ENCODE measurements at regions of chr18 and their contacts with region 1.

Region 1: GRCh38 chr18:49339146-49339545 is 121.3 kb downstream of the DYM start:
- DNase-seq: no peak
- H3K4me3 ChIP-seq: no peak overlapping the region
- H3K27ac ChIP-seq: no peak overlapping the region
- H3K4me1 ChIP-seq: no peaks in the 10 kb centered on the region
- H3K27me3 ChIP-seq: no peaks in the 10 kb centered on the region
- CTCF ChIP-seq: no peak
- POLR2A ChIP-seq: no peak

Region 2: GRCh38 chr18:49206717-49207116 is 132.4 kb before region 1 on chr18:
- intact Hi-C with region 1: no loop called
- DNase-seq: no peak
- H3K4me3 ChIP-seq: no peak overlapping the region
- H3K27ac ChIP-seq: no peak overlapping the region
- H3K4me1 ChIP-seq: no peaks in the 10 kb centered on the region
- H3K27me3 ChIP-seq: no peaks in the 10 kb centered on the region
- CTCF ChIP-seq: no peak
- POLR2A ChIP-seq: no peak

Region 3: DNA sequence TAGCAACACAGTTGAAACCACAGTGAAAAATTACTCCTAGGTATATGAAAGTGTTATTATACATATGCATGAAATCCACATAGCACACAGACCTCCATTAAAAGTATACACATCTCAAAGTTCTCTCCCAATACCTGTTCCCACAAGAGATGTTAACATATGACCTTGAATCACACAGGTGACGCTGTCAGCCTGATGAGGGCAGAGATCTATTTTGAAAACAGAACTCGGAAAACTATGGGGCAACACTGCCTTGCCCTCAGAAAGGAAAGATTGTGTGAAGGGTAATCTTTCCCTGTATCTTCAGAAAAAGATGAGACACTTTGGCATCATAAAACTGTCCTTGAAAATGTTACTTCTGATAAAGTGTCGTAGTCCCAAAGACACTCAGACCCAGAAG is 38.6 kb after region 1 on chr18:
- intact Hi-C with region 1: loop called (anchors 2 kb)
- DNase-seq: no peak
- H3K4me3 ChIP-seq: no peak overlapping the region
- H3K27ac ChIP-seq: no peak overlapping the region
- H3K4me1 ChIP-seq: no peaks in the 10 kb centered on the region
- H3K27me3 ChIP-seq: no peaks in the 10 kb centered on the region
- CTCF ChIP-seq: no peak
- POLR2A ChIP-seq: no peak

Region 4: DNA sequence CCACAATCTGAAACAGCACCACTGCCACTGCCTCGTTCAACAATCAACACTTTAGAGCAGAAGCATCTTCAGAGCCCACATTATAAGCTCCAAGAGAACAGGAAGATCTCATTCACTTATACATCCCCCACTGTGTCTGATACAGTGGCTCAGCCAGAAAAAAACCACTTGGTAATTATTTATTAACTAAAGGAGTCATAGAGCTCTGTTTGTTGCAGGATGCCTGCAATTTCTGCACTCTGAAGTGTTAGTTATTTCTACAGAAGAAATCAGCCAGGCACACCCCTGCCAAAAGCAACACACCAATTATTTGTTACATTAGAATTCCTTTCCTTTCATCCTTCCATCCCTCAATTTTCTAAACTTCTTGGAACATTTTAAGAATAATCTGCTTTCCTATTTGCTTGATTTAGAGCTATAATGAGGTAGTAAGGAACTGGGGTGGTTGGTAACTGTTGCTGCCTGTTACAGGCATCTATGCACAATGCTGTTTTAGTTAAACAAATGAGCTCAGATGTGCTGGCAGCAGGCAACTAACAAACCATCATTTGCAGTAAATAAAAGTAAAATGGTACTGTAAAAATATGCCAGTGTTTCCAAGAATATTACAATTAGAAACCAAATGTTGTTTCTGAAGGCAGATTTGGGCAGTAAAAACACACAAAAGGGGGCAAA is 61.4 kb after region 1 on chr18:
- intact Hi-C with region 1: no loop called
- DNase-seq: no peak
- H3K4me3 ChIP-seq: no peak overlapping the region
- H3K27ac ChIP-seq: no peak overlapping the region
- H3K4me1 ChIP-seq: no peaks in the 10 kb centered on the region
- H3K27me3 ChIP-seq: no peaks in the 10 kb centered on the region
- CTCF ChIP-seq: no peak
- POLR2A ChIP-seq: no peak

Region 5: DNA sequence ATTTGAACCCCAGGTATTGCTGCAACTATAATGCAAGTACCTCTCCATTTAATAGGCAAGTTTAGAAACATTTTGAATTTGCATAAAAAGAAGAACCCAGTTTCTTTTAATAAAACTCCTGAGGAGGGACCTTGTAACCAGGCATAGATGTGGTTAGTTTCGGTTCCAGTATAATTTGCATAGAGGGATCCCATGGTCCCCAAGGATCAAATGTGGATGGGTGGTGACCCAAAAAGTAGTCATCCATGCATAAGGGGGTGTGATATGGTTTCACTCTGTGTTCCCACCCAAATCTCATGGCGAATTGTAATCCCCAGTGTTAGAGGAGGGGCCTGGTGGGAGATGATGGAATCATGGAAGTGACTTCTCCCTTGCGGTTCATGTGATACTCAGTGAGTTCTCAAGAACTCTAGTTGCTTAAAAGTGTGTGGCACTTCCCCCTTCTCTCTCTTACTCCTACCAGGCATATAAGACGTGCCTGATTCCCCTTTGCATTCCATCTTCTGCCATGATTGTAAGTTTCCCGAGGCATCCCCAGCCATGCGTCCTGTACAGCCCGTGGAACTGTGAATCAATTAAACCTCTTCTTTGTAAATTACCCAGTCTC is 995.5 kb after region 1 on chr18:
- intact Hi-C with region 1: no loop called
- DNase-seq: no peak
- H3K4me3 ChIP-seq: no peak overlapping the region
- H3K27ac ChIP-seq: no peak overlapping the region
- H3K4me1 ChIP-seq: no peaks in the 10 kb centered on the region
- H3K27me3 ChIP-seq: no peaks in the 10 kb centered on the region
- CTCF ChIP-seq: no peak
- POLR2A ChIP-seq: no peak